Activated naive CD4-positive, alpha-beta T cell treated with anti-CD3 and anti-CD28 coated beads for 36 hours (primary cell): ENCODE measurements at regions of chr21 and their contacts with region 1.

Region 1: DNA sequence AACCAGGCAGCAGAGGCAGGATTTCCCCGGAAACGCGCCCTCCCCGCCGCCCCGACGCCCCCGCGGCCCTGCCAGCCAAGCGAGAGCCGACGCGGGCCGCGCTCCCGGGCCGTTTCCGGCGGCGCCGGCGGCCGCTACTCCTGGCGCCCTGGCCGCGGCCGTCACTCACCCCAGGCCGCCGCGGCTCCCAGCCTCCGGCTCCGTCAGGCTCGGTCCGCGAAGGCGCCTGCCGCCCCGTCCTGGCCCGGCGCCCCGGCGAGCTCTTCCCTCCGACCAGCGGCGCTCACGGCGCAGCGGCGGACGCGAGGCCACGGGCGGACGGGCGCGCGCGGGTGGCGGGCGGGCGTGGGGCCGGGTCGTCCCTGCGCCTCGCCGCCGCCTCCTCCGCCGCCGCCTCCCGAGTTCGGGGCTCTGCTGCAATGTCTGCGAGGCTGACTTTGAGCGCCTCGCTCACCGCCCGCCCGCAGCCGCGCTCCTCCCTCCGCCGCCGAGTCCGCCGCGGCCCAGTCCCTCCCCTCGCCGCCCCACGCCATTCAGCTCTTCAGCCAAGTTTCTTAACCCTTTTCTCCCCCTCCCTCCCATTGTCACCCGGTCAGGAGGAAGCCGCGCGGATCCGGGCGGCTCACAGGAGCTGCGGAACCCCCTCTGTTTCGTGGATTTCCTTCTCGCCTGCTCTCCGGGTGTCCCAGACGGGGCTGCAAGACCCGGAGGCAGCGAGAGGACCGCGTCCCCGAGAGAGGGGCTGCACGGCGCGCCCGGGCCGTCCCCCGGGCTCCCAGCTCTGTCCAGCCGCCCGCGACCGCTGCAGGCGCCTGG is at the start of gene NRIP1:
- DNase-seq: peak; percentile 71
- H3K4me3 Mint-ChIP-seq: peak within 1 kb of the TSS; percentile 90
- H3K27ac Mint-ChIP-seq: peak within 1 kb of the TSS; percentile 94
- H3K4me1 Mint-ChIP-seq: peaks cover 36% of the 10 kb centered on the region
- H3K27me3 Mint-ChIP-seq: no peaks in the 10 kb centered on the region
- total RNA-seq, gene NRIP1: 6.1 to 6.5 TPM

Region 2: DNA sequence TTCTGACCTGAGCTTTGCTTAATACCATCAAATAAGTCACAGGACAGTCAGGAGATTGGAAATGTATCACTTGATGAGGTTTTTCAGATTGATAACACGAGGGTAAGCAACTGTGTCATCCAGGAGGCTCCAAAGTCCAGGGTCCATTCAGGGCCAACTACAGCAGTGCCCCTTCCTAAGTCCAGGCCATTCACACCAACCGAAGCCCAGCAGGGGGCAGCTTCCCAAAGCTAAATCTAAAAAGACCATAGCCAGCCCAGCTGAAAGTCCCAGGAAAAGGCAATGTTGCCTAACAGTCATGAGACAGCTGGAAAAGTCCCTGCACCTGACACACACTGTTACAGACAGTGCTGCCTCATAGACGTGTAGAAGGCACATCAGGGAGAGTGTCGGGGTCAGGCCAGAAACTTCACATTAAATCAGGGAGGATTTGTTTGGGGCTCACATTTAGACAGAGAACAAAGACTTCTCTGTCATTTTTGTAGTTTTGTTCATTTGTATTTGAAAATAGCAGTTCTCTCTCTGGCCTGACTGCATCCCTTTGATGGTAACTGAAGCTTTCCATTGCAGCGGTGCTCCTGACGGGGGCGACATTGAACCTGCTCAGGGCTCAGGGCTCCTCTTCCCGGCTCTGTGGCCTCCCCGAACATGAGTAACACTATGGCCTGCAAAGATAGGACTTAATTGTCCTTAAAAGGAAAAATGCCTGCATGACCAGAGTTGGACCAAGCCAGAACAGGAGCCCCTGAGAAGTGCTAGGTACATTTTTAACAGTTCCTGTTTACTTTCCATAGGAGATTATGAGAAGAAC is 200.4 kb before region 1 on chr21:
- CTCF ChIA-PET with region 1: interaction called, 3 read pairs
- intact Hi-C with region 1: loop called (anchors 2 kb)
- DNase-seq: peak; percentile 74
- H3K4me3 Mint-ChIP-seq: no peak overlapping the region
- H3K27ac Mint-ChIP-seq: no peak overlapping the region
- H3K4me1 Mint-ChIP-seq: peaks cover 10% of the 10 kb centered on the region
- H3K27me3 Mint-ChIP-seq: peaks cover 2% of the 10 kb centered on the region

Region 3: DNA sequence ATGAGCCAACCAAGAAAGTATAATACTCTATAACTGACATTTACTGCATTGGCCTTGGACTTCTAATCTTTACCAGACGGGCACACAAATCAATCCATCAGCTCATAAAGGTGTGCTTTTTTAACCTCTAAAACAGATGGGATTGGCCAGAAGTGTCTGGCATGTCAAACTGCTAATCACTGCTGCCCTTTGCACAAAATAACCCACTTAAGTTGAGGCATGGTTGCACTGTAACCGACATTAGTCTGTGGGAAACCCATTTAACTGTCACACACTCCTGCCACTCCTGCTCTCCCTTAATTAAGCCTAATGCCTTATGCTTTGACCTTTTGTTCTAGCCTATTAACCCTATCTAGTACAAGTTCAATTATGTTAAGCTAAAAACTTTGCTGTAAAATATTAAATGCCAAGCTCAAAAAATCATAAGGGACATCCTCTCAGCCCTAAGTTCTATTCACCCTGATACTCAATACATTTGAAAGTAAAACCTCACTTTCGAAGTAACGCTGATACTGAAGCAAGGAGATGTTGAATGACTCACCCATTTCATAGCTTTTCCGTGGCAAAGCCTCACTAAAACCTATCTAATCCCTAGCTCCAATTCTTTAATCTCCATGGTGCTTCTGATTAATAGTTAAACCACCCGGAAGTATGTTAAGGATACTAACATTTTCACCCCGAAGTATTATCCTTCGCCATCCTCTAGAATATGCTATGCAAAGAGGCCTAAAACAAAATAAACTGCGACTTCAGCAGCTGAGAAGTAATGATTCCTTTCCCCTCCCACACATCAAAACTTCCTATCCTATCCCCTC is 12.9 kb before region 1 on chr21:
- CTCF ChIA-PET with region 1: interaction called, 9 read pairs
- intact Hi-C with region 1: loop called (anchors 1 kb)
- DNase-seq: no peak
- H3K4me3 Mint-ChIP-seq: peak overlapping the region; percentile 69
- H3K27ac Mint-ChIP-seq: peak overlapping the region; percentile 63
- H3K4me1 Mint-ChIP-seq: peaks cover 77% of the 10 kb centered on the region
- H3K27me3 Mint-ChIP-seq: no peaks in the 10 kb centered on the region

Region 4: GRCh38 chr21:15422783-15423182 is 358.0 kb after region 1 on chr21:
- CTCF ChIA-PET with region 1: no interaction called
- intact Hi-C with region 1: loop called (anchors 1 kb)
- DNase-seq: peak; percentile 12
- H3K4me3 Mint-ChIP-seq: no peak overlapping the region
- H3K27ac Mint-ChIP-seq: peak overlapping the region; percentile 14
- H3K4me1 Mint-ChIP-seq: peaks cover 39% of the 10 kb centered on the region
- H3K27me3 Mint-ChIP-seq: peaks cover 5% of the 10 kb centered on the region

Region 5: GRCh38 chr21:15514073-15514946 is 449.5 kb after region 1 on chr21:
- CTCF ChIA-PET with region 1: no interaction called
- intact Hi-C with region 1: loop called (anchors 1 kb)
- DNase-seq: peak; percentile 72
- H3K4me3 Mint-ChIP-seq: peak overlapping the region; percentile 55
- H3K27ac Mint-ChIP-seq: peak overlapping the region; percentile 85
- H3K4me1 Mint-ChIP-seq: peaks cover 28% of the 10 kb centered on the region
- H3K27me3 Mint-ChIP-seq: no peaks in the 10 kb centered on the region

Region 6: GRCh38 chr21:15592271-15592860 is 527.6 kb after region 1 on chr21:
- CTCF ChIA-PET with region 1: no interaction called
- intact Hi-C with region 1: loop called (anchors 2 kb)
- DNase-seq: peak; percentile 5
- H3K4me3 Mint-ChIP-seq: no peak overlapping the region
- H3K27ac Mint-ChIP-seq: no peak overlapping the region
- H3K4me1 Mint-ChIP-seq: no peaks in the 10 kb centered on the region
- H3K27me3 Mint-ChIP-seq: no peaks in the 10 kb centered on the region